HCT116 (cell line): ENCODE measurements at regions of chr21 and their contacts with region 1.

Region 1: DNA sequence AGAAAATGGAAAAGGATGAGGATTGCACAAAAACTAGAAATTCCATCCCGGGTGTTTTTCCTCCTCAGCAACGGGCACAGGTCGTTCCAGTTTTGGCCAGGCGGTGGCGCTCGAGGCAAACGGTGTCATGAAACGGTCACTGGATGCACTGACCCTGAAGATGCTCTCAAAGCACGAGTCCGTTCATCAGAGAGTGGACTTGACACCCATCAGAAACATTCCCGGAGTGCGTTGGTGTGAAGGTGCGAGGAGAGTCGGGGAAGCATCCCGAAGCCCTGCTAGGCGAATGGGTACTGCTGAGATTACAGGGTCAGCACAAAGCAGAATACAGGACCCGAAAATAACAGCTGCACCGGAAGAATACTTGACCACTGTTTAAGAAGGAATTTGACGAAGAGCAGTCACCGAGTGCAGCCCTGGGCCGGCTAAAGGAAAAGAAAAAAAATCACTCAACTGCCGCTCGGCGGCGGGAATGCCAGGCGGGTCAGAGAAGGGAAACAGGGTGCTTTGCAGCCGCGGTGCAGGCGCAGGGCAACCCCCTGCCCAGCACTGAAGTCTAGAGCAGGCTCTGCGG is 71.7 kb upstream of the ETS2 start:
- DNase-seq: peak; percentile 36
- ATAC-seq: peak; percentile 96
- H3K4me3 ChIP-seq: no peak overlapping the region
- H3K27ac ChIP-seq: no peak overlapping the region
- H3K4me1 ChIP-seq: peaks cover 0 to 3% of the 10 kb centered on the region in 2 experiments; a peak in 1 of 4 replicates
- H3K27me3 ChIP-seq: no peaks in the 10 kb centered on the region
- CTCF ChIP-seq: peak; percentile 68 to 96 (median 90)
- POLR2A ChIP-seq: no peak
- RAD21 ChIP-seq: peak; percentile 96

Region 2: DNA sequence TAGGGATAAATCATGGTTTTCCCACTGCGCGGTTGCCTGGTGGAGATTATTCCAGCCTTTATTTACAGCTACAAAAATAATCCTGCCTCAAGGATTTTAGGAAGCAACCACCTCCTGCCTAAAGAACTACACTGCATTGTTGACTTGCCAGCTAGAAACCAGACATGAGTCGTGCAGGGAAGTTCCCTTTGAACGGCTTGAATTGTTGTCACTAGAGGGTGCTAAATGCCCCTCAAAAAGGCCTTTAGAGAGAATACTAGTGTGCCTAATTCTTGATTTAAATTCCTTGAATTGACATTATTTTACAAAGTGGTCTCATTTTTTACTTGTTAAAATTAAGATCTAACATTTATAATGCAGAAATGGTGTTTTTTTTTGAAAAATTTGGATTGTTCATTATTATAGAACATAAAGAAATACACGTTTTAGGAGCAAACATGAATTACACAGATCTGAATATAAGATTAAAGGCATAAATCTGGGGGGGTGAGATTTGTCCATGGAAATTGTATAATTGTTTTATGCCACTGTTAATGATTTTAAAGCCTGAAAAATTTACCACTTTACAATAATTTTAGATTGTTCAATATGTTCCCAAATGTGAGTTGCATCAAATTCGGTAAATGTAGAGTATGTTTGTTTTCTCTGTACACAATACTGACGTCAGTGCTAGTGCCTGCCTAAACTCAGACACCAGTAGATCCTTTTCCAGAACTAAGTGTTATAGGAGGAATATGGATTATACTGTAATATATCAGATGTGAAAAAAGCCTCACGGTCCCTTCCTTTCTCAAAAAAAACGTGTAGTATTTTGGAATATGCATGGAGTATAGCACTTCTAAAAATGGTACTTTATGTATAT is 228.2 kb before region 1 on chr21:
- CTCF ChIA-PET with region 1: no interaction called
- POLR2A ChIA-PET with region 1: no interaction called
- RAD21 ChIA-PET with region 1: no interaction called
- intact Hi-C with region 1: loop called (anchors 5 kb)
- DNase-seq: peak; percentile 42
- ATAC-seq: peak; percentile 86
- H3K4me3 ChIP-seq: no peak overlapping the region
- H3K27ac ChIP-seq: no peak overlapping the region
- H3K4me1 ChIP-seq: no peaks in the 10 kb centered on the region
- H3K27me3 ChIP-seq: peaks cover 8% of the 10 kb centered on the region; the same call in 1 of the 2 replicates
- CTCF ChIP-seq: peak; percentile 52 to 69 (median 67); a peak in 5 of 6 replicates
- POLR2A ChIP-seq: no peak
- RAD21 ChIP-seq: peak; percentile 64

Region 3: DNA sequence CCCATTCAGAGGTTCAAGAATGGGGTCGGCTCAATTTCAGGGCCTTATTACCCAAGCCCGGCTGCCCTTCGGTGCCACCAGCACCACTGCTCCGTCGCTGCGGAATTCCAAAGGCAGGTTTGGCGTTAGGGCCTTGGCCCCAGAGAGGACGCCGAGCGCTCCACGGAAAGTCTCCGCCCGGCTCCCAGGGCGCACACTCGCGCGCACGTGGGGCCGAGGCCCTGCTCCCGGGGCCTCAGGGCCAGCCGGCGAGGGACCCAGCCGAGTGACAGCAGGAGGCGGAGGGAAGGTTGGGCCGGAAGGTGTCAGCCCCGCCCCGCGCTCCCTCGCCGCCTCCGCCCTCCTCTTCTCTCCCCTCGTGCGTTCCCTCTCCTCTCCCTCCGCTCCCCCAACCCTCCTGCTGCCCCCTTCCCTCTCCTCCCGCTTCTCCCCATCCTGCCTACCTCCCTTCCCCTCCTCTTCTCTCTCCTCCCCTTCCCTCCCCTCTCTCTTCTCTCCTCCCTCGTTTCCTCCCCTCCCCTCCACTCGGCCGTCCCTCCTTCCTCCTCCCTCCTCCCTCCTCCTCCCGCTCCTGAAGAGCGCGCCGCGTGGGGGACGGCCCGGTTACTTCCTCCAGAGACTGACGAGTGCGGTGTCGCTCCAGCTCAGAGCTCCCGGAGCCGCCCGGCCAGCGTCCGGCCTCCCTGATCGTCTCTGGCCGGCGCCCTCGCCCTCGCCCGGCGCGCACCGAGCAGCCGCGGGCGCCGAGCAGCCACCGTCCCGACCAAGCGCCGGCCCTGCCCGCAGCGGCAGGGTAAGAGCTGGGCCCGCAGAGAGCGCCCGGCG is 71.5 kb after region 1 on chr21 and contains the start of gene ETS2:
- CTCF ChIA-PET with region 1: no interaction called
- POLR2A ChIA-PET with region 1: no interaction called
- RAD21 ChIA-PET with region 1: no interaction called
- intact Hi-C with region 1: loop called (anchors 2 kb)
- DNase-seq: peak; percentile 87
- ATAC-seq: peak; percentile 84
- H3K4me3 ChIP-seq: peak within 1 kb of the TSS; percentile 81
- H3K27ac ChIP-seq: peak within 1 kb of the TSS; percentile 80
- H3K4me1 ChIP-seq: peaks cover 13 to 37% of the 10 kb centered on the region in 2 experiments; a peak in 3 of 4 replicates
- H3K27me3 ChIP-seq: no peaks in the 10 kb centered on the region
- CTCF ChIP-seq: no peak
- POLR2A ChIP-seq: peak; percentile 83
- RAD21 ChIP-seq: no peak
- total RNA-seq, gene ETS2: 32.9 TPM

Region 4: GRCh38 chr21:38913120-38913892 is 179.2 kb after region 1 on chr21:
- CTCF ChIA-PET with region 1: no interaction called
- POLR2A ChIA-PET with region 1: no interaction called
- RAD21 ChIA-PET with region 1: no interaction called
- intact Hi-C with region 1: loop called (anchors 5 kb)
- DNase-seq: peak; percentile 77
- ATAC-seq: peak; percentile 85
- H3K4me3 ChIP-seq: peak overlapping the region; percentile 30 to 52
- H3K27ac ChIP-seq: peak overlapping the region; percentile 49
- H3K4me1 ChIP-seq: peaks cover 50 to 54% of the 10 kb centered on the region in 2 experiments
- H3K27me3 ChIP-seq: no peaks in the 10 kb centered on the region
- CTCF ChIP-seq: no peak
- POLR2A ChIP-seq: no peak
- RAD21 ChIP-seq: no peak

Region 5: GRCh38 chr21:39022863-39023693 is 289.0 kb after region 1 on chr21:
- CTCF ChIA-PET with region 1: no interaction called
- POLR2A ChIA-PET with region 1: no interaction called
- RAD21 ChIA-PET with region 1: no interaction called
- intact Hi-C with region 1: loop called (anchors 2 kb)
- DNase-seq: no peak
- ATAC-seq: peak; percentile 64
- H3K4me3 ChIP-seq: no peak overlapping the region
- H3K27ac ChIP-seq: no peak overlapping the region
- H3K4me1 ChIP-seq: peaks cover 0 to 12% of the 10 kb centered on the region in 2 experiments; a peak in 1 of 4 replicates
- H3K27me3 ChIP-seq: no peaks in the 10 kb centered on the region
- CTCF ChIP-seq: peak; percentile 12 to 43 (median 32); a peak in 4 of 6 replicates
- POLR2A ChIP-seq: no peak
- RAD21 ChIP-seq: peak; percentile 42; the same call in 1 of the 2 replicates

Region 6: DNA sequence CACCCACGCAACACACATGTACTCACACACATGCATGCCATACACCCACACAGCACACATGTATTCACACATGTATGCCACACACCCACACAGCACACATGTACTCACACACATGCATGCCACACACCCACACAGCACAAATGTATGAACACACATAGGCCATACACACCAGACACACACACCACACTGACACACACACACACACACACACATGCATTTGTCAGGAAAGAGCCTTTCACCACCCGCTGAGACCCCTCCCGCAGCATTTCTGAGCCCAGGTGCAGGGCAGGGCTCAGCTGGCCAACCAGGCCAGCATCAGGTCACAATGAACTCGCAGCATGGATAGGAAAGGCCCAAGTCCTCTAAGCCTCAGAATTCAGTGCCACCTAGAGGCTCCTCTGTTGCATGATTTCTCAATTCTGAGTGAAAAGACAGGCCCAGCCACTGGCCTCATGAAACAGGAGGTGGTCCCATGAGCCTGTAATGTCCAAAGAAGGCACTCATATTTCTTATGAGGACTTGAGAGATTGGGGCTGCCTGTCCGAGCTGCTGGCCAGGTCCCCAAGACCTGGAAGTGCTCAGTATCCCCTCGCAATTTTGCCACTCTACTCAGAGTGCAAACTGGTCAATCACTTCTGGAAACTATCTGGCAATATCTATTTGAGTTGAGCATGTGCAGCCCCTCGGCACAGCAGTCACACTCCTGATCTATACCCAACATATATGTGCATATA is 391.9 kb after region 1 on chr21:
- CTCF ChIA-PET with region 1: no interaction called
- POLR2A ChIA-PET with region 1: no interaction called
- RAD21 ChIA-PET with region 1: no interaction called
- intact Hi-C with region 1: loop called (anchors 1 kb)
- DNase-seq: peak; percentile 45
- ATAC-seq: peak; percentile 96
- H3K4me3 ChIP-seq: no peak overlapping the region
- H3K27ac ChIP-seq: no peak overlapping the region
- H3K4me1 ChIP-seq: no peaks in the 10 kb centered on the region
- H3K27me3 ChIP-seq: no peaks in the 10 kb centered on the region
- CTCF ChIP-seq: peak; percentile 55 to 60 (median 56); a peak in 5 of 6 replicates
- POLR2A ChIP-seq: no peak
- RAD21 ChIP-seq: peak; percentile 76

Region 7: DNA sequence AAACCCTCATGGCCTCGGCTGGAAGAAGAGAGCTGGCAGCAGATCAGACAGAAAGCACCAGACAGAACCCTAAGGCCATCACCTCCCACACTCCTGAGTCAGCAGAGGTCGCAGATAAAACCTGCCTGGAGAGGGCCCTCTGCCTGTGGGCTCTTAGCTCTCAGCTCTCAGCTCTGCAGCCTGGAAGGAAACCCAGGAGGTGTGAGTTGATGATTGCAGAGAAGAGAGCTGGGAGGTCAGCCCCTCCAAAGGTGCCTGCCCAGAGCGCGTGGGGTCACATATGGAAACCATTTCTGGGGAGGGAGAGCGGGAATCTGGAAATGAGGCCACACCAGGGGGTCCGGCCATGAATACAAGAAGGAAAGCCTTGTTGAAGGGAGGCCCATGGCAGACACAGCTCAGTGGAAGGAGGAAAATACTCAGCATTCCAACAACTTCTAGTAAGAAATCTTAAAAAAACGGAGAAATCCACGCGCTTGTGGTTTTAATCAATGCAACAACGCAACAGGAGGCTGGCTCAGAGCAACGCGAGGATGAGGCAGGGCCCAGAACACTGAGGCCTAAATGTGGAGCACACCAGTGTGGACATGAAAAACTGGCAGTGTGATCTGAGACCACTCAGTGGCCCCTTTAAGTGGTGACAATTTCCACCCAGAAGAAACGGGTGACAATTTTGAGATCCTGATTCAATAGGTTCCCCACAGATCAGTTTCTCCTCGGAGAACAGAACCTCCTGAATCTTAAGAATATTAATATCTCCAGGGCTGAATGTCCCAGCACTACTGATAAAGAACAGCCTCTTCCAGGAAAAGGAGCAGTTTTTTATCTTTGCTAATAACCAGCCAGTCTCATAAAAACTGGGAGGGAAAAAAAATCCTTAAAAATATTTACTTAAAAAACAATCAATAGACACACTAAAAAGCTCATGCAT is 403.5 kb after region 1 on chr21:
- CTCF ChIA-PET with region 1: interaction called, 9 read pairs
- POLR2A ChIA-PET with region 1: no interaction called
- RAD21 ChIA-PET with region 1: no interaction called
- intact Hi-C with region 1: loop called (anchors 1 kb)
- DNase-seq: no peak
- ATAC-seq: no peak
- H3K4me3 ChIP-seq: no peak overlapping the region
- H3K27ac ChIP-seq: no peak overlapping the region
- H3K4me1 ChIP-seq: peaks cover 7 to 11% of the 10 kb centered on the region in 2 experiments; a peak in 2 of 4 replicates
- H3K27me3 ChIP-seq: no peaks in the 10 kb centered on the region
- CTCF ChIP-seq: no peak
- POLR2A ChIP-seq: no peak
- RAD21 ChIP-seq: no peak